ENCODE measurements at regions of chr12 and their contacts with region 1.

Region 1: GRCh38 chr12:66169221-66170170 is at the start of gene TMBIM4:
- DNase-seq: peak; percentile 91
- H3K4me3 ChIP-seq: peak within 1 kb of the TSS; percentile 80
- H3K27ac ChIP-seq: peak within 1 kb of the TSS; percentile 93
- H3K4me1 ChIP-seq: peaks cover 23% of the 10 kb centered on the region
- CTCF ChIP-seq: peak; percentile 73
- total RNA-seq, gene TMBIM4: 16.0 and 19.2 TPM in 2 replicates

Region 2: GRCh38 chr12:65765436-65765813 is 404.1 kb before region 1 on chr12:
- CTCF ChIA-PET with region 1: no interaction called
- POLR2A ChIA-PET with region 1: no interaction called
- intact Hi-C with region 1: no loop called
- DNase-seq: no peak
- H3K4me3 ChIP-seq: no peak overlapping the region
- H3K27ac ChIP-seq: no peak overlapping the region
- H3K4me1 ChIP-seq: no peaks in the 10 kb centered on the region
- CTCF ChIP-seq: no peak

Region 3: DNA sequence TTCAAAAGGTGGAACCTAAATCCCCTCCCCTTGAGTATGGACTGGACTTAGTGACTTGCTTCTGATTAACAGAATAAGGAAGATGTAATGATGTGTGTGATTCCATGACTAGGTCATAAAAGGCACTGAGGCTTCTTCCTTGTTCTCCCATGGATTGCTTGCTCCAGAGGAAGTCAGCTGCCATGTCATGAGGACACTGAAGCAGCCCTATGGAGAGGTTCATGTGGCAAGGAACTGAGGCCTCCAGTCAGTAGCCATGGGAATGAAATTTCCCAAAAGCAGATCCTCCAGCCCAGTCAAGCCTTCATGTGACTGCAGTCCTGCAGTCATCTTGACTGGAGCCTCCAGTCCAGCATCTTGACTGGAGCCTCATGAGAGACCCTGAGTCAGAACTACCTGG is 10.4 kb before region 1 on chr12:
- CTCF ChIA-PET with region 1: interaction called, 4 read pairs
- POLR2A ChIA-PET with region 1: interaction called, 13 read pairs
- intact Hi-C with region 1: no loop called
- DNase-seq: no peak
- H3K4me3 ChIP-seq: no peak overlapping the region
- H3K27ac ChIP-seq: no peak overlapping the region
- H3K4me1 ChIP-seq: no peaks in the 10 kb centered on the region
- CTCF ChIP-seq: no peak

Region 4: GRCh38 chr12:66196806-66197205 is 27.3 kb after region 1 on chr12:
- CTCF ChIA-PET with region 1: no interaction called
- POLR2A ChIA-PET with region 1: interaction called, 16 read pairs
- intact Hi-C with region 1: no loop called
- DNase-seq: peak; percentile 74
- H3K4me3 ChIP-seq: peak overlapping the region; percentile 36
- H3K27ac ChIP-seq: peak overlapping the region; percentile 48
- H3K4me1 ChIP-seq: peaks cover 34% of the 10 kb centered on the region
- CTCF ChIP-seq: no peak

Region 5: DNA sequence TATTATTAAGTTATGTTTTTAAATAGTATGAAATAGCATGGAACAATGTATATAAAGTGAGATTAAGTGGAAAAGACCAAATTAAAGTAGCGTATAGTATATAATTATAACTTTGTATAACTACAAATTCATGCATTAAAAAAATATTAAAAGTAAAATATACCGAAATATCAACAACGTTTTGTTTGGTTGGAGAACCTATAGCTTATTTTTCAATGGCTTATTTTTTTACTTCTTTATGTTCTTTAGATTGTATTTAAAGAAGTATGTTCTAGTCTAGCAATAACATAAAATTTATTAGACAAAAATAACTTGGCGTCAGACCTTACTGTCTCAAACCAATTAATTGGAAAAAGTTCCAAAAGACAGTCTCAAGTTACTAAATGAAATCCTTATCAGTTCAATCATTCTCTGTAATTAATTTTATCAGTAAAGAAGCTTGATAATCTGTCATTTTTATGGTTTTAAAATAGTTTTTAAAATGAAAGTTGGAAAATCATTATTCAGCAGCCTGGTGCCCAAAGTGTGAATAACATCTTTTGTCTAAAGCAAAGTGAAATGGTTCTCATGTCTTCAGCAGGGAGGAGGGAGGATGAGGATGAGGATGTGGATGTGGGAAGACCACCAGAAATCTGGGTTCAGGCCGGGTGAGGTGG is 66.3 kb after region 1 on chr12:
- CTCF ChIA-PET with region 1: no interaction called
- POLR2A ChIA-PET with region 1: interaction called, 11 read pairs
- intact Hi-C with region 1: loop called (anchors 1 kb)
- DNase-seq: peak; percentile 38
- H3K4me3 ChIP-seq: peak overlapping the region; percentile 70
- H3K27ac ChIP-seq: peak overlapping the region; percentile 14
- H3K4me1 ChIP-seq: peaks cover 35% of the 10 kb centered on the region
- CTCF ChIP-seq: peak; percentile 37

Region 6: DNA sequence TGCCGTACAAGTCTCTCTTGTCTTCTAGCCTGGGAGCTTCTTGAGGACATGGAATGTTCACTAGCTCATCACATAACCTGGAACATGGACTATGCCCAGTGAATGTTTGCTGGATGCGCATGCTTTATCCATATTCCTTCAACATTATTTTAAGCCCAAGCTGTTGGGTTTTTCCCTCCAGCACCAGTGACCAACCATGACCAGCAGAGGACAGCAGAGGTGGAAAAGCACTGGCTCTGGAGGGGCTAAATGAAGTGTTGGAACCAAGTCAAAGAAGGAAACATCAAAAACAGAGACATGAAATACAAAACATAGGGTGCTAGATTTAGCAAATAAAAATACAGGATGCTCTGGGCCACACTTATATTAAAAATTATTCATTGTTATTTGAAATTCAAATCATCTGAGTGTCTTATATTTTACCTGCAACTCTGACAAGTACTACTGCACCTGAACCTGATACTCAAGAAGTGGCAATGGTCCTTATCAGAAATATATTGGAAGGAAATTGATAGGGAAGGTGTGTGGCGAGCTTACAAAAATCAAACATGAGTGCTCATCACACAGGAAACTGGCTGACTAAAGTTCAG is 109.7 kb after region 1 on chr12:
- CTCF ChIA-PET with region 1: no interaction called
- POLR2A ChIA-PET with region 1: no interaction called
- intact Hi-C with region 1: no loop called
- DNase-seq: no peak
- H3K4me3 ChIP-seq: no peak overlapping the region
- H3K27ac ChIP-seq: no peak overlapping the region
- H3K4me1 ChIP-seq: no peaks in the 10 kb centered on the region
- CTCF ChIP-seq: peak; percentile 71

Measured in OCI-LY7 (cell line).